HepG2 (cell line): ENCODE measurements at regions of chr1 and their contacts with region 1.

Region 1: DNA sequence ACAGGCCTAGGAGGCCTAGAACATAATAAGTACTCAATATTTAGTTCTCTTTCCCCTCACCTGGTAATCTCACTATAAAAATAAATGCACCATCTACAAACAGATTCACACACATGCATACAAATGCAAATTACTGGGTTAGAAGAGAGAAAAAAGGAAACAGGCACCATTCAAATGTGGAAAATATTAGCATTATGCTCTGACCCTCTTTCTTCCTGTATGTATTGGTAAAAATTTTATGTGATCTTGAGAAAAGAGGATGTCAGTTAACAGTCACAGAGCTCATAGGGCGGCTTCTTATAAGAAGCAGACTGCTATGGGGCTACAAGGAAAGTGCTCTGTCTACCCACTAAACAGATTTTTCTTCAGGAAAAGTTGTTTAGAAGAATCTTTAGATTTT is 565.4 kb downstream of the LMO4 start:
- DNase-seq: no peak
- ATAC-seq: no peak
- H3K4me3 ChIP-seq: no peak overlapping the region
- H3K27ac ChIP-seq: no peak overlapping the region
- H3K4me1 ChIP-seq: no peaks in the 10 kb centered on the region
- H3K27me3 ChIP-seq: no peaks in the 10 kb centered on the region; a peak in 1 of 5 replicates
- CTCF ChIP-seq: no peak
- EP300 ChIP-seq: no peak
- POLR2A ChIP-seq: no peak
- RAD21 ChIP-seq: no peak

Region 2: DNA sequence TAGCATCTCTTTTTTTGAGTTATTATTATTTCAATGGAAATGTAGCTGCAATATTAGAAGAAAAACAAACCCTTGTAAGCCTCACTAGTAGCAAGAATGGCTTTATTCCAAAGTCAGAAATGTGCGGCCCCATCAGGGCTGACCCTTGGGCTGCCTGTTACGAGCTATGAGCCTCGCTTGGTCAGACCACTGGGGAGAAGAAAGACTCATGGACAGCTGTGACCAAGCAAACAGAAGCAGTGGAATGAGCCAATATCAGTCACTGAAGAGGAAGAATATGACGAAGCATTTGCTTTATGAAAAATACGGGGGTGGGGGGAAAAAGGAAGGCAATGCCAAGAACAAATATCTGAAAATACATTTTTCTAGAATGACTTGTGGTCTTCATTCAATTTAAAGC is 60.9 kb before region 1 on chr1:
- CTCF ChIA-PET with region 1: no interaction called
- POLR2A ChIA-PET with region 1: no interaction called
- in situ Hi-C with region 1: no loop called
- intact Hi-C with region 1: loop called (anchors 10 kb)
- DNase-seq: no peak
- ATAC-seq: peak; percentile 53; the same call in 2 of the 3 replicates
- H3K4me3 ChIP-seq: no peak overlapping the region
- H3K27ac ChIP-seq: no peak overlapping the region
- H3K4me1 ChIP-seq: no peaks in the 10 kb centered on the region
- H3K27me3 ChIP-seq: no peaks in the 10 kb centered on the region
- CTCF ChIP-seq: no peak
- EP300 ChIP-seq: no peak
- POLR2A ChIP-seq: no peak
- RAD21 ChIP-seq: no peak